ENCODE measurements at regions of chr15 and their contacts with region 1.

Region 1: GRCh38 chr15:89647191-89647851 is 7.9 kb downstream of the KIF7 start:
- DNase-seq: peak; percentile 66 to 86 (median 82)
- H3K4me3 ChIP-seq: no peak overlapping the region
- H3K27ac ChIP-seq: no peak overlapping the region
- H3K4me1 ChIP-seq: peaks cover 5% of the 10 kb centered on the region
- H3K27me3 ChIP-seq: no peaks in the 10 kb centered on the region
- CTCF ChIP-seq: peak; percentile 65 to 89 (median 75)
- EP300 ChIP-seq: no peak
- POLR2A ChIP-seq: no peak

Region 2: DNA sequence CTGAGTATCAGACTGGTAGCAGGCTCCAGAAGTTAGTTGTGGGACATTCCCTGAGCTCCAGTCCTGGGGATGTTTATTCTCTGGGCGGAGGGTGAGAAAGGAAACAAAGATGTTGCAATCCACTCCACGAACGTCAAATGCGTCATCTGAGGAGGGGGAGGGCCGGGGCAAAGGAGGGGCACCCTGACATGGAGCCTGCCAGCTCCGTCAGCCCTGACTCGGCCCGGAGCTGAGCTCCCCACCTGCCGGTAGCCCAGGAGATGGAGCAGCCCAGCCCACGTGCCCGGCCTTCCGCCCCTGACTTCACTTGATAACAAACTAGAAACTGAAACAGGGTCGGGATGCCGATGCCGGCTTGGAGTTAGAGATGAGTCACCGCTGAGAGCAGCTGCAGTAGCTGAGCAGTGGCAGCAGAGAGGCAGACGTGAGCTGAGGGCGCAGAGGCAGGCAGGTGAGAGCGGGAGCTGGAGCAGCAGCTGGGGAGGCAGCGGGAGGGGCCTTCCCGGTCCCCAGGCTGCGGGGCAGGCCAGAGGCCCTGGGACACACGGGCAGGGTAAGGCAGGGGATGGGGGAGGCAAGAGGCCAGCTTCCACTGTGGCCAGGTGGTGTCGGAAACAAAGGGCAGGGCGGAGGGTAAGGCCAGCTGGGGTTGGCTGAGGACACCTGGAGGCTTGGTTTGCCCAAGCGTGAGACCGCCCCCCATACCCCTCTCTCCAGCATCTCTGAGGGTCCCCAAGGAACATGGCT is 1008.5 kb before region 1 on chr15 and contains the start of gene ISG20:
- intact Hi-C with region 1: no loop called
- DNase-seq: peak; percentile 97 to 98 (median 97)
- H3K4me3 ChIP-seq: peak within 1 kb of the TSS; percentile 44
- H3K27ac ChIP-seq: peak within 1 kb of the TSS; percentile 93 to 98
- H3K4me1 ChIP-seq: peaks cover 8% of the 10 kb centered on the region
- H3K27me3 ChIP-seq: no peaks in the 10 kb centered on the region
- CTCF ChIP-seq: peak; percentile 32 to 78 (median 78)
- EP300 ChIP-seq: peak; percentile 89
- POLR2A ChIP-seq: peak; percentile 76
- total RNA-seq, gene ISG20: 7.2 to 58.6 (median 19.4) TPM

Region 3: DNA sequence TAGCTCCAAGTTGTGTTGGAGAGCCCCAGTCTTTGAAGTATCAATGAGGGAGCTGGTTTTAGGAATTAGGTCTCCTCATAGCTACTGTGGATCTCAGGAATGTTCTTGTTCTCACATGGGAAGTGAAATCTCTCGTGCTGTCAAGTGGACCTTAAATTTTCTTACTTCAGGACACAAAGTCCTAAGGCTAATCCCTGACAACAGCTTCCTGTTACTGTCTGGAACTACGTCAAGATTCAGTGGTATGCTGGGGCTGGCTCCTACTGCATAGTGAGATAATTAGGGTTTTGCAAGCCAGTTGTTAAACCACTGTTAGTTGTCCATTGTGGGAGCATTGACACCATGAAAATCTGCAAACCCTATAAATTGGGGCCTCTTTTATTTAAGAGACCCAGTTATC is 80.9 kb after region 1 on chr15:
- intact Hi-C with region 1: no loop called
- DNase-seq: peak in 1 of 5 donors; percentile 45
- H3K4me3 ChIP-seq: no peak overlapping the region
- H3K27ac ChIP-seq: no peak overlapping the region
- H3K4me1 ChIP-seq: peaks cover 9% of the 10 kb centered on the region
- H3K27me3 ChIP-seq: no peaks in the 10 kb centered on the region
- CTCF ChIP-seq: no peak
- EP300 ChIP-seq: peak; percentile 91
- POLR2A ChIP-seq: no peak

Region 4: GRCh38 chr15:89740137-89740536 is 92.8 kb after region 1 on chr15:
- intact Hi-C with region 1: loop called in 3 of 4 experiments (anchors 5 to 10 kb)
- DNase-seq: peak in 3 of 5 donors; percentile 37 to 62 (median 50)
- H3K4me3 ChIP-seq: no peak overlapping the region
- H3K27ac ChIP-seq: no peak overlapping the region
- H3K4me1 ChIP-seq: no peaks in the 10 kb centered on the region
- H3K27me3 ChIP-seq: no peaks in the 10 kb centered on the region
- CTCF ChIP-seq: peak; percentile 83 to 85 (median 84)
- EP300 ChIP-seq: no peak
- POLR2A ChIP-seq: no peak

Region 5: DNA sequence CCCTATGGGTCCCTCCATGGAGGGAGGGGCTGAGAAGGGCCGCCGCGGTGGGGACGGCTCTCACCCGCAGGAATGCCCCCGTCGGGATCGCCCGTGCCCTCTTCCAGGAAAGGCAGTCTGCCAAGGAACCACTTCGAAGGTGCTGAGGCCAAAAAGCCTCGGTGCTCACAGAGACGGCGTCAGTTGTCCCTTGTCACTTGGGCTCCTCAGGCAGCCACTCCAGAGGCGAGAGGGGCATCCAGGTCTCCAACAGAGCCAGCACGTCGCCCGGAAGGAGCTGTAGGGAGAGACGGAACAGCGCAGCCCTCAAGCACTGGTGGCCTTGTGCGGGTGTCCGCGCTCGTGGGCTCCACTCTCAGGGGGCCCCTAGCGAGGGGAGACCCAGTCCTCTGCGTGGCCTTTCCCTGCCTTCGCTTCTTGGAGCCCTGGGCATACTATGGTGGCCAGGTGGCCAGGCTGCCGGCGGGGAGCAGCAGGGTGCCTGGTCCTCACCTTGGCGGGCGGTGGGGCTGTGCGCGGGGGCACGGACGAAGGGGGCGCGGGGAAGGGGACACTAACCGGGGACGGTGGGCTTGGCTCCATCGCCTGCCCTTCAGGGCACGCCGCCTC is 102.7 kb after region 1 on chr15:
- intact Hi-C with region 1: loop called in 3 of 4 experiments (anchors 5 to 10 kb)
- DNase-seq: peak in 2 of 5 donors; percentile 33 to 42
- H3K4me3 ChIP-seq: peak overlapping the region; percentile 58
- H3K27ac ChIP-seq: no peak overlapping the region
- H3K4me1 ChIP-seq: peaks cover 7% of the 10 kb centered on the region
- H3K27me3 ChIP-seq: no peaks in the 10 kb centered on the region
- CTCF ChIP-seq: no peak
- EP300 ChIP-seq: no peak
- POLR2A ChIP-seq: no peak